HEK293 (cell line): ENCODE measurements at regions of chr12 and their contacts with region 1.

Region 1: DNA sequence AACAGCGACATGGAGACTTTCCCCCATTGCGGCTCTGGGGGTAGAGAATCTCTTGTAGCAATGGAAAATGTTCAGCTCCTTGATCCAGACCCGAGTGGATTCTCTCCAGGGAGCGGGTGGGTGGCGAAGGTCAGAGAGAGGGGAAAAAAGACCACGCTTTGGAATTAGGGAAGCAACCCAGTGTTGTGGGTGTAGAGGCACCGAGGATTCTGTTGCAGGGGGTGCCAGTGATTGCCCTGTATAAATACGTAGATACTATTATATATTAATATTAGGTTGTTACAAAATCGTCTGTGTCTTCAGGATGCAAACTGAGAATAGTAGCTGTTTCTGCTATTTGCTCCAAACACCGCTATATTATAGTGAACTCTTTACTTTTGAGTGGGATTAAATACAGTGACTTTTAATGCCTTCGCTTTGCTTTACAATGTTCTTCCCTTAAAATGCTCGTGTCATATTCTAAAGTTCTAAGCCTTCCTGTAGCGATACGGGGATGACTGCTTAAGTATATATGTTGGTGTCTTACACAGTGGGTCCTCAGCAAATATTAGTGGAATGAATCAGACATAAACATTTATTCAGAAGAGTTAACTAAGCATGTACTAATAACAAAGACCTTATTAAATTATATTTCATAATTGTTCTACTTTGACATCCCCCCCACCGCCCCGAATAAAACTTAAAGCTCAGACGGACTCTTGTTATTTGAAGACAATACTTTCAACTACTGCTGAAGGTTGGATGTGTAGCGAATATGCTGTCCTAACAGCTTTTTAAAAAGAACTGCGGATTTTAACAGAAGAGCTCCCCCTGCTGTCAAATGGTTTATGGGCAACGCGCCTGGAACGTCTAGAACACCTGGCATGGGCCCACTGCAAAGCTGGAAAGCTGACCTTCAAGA is 136.4 kb upstream of the KRAS start:
- H3K4me3 ChIP-seq: peak overlapping the region; percentile 72
- H3K27ac ChIP-seq: peak overlapping the region; percentile 75; the same call in 1 of the 2 replicates
- H3K4me1 ChIP-seq: no peaks in the 10 kb centered on the region
- CTCF ChIP-seq: peak; percentile 68

Region 2: DNA sequence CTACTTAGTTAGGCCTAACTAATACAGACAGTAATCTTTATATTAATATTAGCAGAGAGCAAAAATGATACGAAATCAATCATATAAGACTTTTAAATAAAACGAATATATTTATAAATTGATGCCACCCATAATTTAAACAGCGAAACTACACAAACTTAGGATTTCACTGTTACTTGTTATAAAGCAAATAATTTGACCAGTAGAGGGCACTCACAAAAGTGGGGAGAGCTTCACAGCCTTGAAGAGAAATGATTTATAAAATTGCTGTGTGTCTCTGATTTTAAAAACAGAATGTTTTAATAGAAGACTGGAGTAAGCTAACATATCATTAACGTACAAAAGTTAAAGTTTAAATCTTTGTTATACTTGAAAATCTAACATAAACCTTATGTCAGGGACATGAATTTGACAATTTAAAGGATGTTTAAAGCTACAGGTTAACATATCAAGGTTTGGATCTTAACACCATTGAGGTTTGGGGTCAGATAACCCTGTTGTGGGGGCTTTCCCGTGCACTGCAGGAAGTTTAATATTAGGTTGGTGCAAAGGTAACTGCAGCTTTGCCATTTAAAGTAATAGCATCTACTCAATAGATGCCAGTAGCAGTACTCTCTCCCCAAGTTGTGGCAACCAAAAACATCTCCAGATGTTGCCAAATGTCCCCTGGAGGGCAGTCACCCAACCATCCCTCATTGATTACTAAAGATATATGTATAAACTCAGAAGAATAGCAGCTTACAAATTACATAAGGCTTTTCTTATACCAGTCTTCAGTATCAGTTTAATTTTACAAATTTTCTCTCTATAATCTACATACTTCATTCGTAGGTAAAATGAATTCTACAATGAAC is 145.7 kb before region 1 on chr12:
- CTCF ChIA-PET with region 1: interaction called, 13 read pairs
- POLR2A ChIA-PET with region 1: no interaction called
- H3K4me3 ChIP-seq: no peak overlapping the region
- H3K27ac ChIP-seq: no peak overlapping the region
- H3K4me1 ChIP-seq: peaks cover 4% of the 10 kb centered on the region; the same call in 1 of the 2 replicates
- CTCF ChIP-seq: no peak

Region 3: DNA sequence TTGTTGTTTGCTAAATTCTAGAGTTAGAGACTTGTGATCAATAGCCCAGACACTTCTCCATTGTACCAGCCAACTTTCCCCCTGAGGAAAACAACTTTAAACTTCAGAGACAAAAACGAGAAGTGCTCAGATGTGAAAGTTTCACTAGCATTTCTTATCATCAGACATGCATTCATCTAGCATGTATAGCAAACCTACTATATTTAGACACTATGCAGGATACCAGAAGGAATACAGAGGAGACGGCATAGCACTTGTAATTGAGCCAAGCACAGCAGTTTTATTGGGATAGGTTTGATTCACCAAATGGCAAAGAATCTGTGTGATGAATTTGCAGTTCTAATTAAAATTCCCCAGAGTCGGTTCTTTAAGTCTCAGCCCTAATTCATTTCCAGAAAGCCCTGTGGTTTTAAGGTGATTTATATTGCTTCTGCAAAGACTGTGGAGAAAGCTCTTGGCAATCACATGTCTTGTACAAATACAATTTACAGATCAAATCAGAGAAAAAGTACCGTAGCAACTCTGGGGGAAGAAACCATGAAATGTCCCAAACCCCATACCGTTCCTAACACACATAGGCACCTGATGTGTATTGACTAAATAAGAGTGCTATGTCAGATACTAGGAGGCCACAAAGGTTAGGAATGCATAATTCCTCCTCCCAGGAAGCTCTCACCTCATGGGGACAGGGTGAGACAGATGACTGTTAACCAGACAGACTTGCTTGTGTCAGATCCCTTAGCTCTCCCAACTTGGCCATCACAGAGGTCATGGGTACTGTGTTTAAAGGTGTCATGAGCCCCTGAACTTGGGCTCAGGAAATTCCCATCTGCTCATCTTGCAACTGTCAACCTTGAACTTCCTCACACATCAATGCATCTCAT is 66.7 kb before region 1 on chr12:
- CTCF ChIA-PET with region 1: no interaction called
- POLR2A ChIA-PET with region 1: no interaction called
- H3K4me3 ChIP-seq: no peak overlapping the region
- H3K27ac ChIP-seq: peak overlapping the region; percentile 11; the same call in 1 of the 2 replicates
- H3K4me1 ChIP-seq: peaks cover 16% of the 10 kb centered on the region
- CTCF ChIP-seq: no peak

Region 4: GRCh38 chr12:25699454-25699853 is 312.4 kb after region 1 on chr12:
- CTCF ChIA-PET with region 1: no interaction called
- POLR2A ChIA-PET with region 1: no interaction called
- H3K4me3 ChIP-seq: no peak overlapping the region
- H3K27ac ChIP-seq: no peak overlapping the region
- H3K4me1 ChIP-seq: no peaks in the 10 kb centered on the region
- CTCF ChIP-seq: no peak